ENCODE measurements at regions of chr17 and their contacts with region 1.

Region 1: DNA sequence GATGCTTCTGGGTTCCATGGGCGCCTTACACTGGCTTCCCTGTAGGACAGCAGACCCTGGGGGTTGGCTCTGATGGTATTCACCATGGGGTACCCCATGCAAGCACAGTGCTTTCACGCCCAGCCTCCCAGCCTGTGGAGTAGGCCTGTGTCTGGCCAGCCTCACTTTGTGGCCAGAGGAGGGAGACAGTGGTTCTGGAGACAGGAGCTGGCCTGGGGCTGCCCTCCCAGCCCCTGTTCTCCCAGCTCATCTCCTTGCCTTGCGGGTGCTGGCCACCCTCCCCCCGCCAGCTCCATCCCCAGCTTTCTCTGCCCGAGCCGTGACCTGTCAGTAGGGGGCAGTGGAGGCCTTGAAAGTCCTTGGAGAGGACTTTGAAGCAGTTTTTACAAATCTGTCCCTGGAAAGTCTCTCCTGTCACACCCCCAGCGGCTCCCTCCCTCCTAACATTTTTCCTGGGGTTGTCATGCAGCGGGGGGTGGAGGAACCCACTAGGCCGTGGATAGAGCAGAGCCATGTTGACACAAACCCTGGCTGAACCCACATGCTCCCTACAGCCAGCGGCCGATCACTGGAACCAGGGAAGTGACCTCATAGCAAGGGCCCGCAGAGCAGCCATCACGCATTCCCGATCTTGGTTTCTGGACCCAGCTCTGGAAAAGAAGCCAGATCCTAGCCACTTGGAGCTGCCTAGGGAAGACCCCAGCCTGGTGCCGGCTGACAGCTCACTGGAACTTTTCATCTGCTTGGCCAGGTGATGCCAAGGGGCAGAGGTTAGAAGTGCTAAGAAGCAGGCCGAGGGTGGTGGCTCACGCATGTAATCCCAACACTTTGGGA is 289.4 kb downstream of the SEC14L1 start:
- DNase-seq: peak; percentile 87
- ATAC-seq: peak; percentile 24
- H3K4me3 Mint-ChIP-seq: no peak overlapping the region
- H3K27ac Mint-ChIP-seq: peak overlapping the region; percentile 57
- H3K4me1 Mint-ChIP-seq: peaks cover 96% of the 10 kb centered on the region
- H3K27me3 Mint-ChIP-seq: no peaks in the 10 kb centered on the region

Region 2: GRCh38 chr17:77372444-77373298 is 57.5 kb before region 1 on chr17:
- CTCF ChIA-PET with region 1: interaction called, 25 read pairs
- POLR2A ChIA-PET with region 1: interaction called, 3 read pairs
- DNase-seq: peak; percentile 83
- ATAC-seq: peak; percentile 49
- H3K4me3 Mint-ChIP-seq: peak overlapping the region; percentile 79
- H3K27ac Mint-ChIP-seq: peak overlapping the region; percentile 88
- H3K4me1 Mint-ChIP-seq: peaks cover 56% of the 10 kb centered on the region
- H3K27me3 Mint-ChIP-seq: peaks cover 4% of the 10 kb centered on the region

Region 3: DNA sequence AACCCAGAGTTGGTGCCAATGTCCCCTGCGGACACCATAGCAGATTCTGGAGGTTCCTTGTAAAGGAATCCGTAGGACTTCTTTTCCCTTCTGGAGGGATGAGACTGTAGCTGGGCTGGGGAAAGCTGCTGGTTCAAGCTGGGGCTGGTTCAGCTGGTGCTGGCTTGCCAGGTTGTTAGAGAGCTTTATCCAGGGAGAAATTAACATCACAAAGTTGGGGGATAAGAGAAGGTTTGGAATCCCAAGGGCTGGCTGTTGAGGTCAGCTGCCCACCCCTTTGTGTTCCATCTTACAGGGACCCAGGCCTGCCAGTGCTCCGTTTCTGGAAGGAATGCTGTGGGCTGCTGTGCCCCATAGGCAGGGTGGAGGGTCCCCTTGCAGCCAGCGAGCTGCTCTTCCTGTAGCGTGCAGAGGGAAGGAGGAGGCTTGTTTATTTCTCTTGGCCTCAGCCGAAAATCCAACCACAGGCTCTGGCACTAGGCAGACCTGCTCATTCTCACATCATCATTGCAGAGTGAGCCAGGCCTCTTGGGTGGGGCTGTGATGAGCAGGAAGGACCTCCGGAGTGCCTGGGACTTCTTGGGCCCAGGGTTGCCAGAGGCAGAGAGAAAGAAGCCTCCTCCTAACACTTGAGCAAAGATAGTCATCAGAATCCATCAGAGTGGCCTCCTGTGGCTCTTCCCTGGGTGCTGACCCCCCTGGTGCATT is 38.3 kb before region 1 on chr17:
- CTCF ChIA-PET with region 1: interaction called, 13 read pairs
- POLR2A ChIA-PET with region 1: interaction called, 4 read pairs
- DNase-seq: peak; percentile 84
- ATAC-seq: peak; percentile 54
- H3K4me3 Mint-ChIP-seq: peak overlapping the region; percentile 84
- H3K27ac Mint-ChIP-seq: peak overlapping the region; percentile 92
- H3K4me1 Mint-ChIP-seq: peaks cover 89% of the 10 kb centered on the region
- H3K27me3 Mint-ChIP-seq: no peaks in the 10 kb centered on the region

Region 4: DNA sequence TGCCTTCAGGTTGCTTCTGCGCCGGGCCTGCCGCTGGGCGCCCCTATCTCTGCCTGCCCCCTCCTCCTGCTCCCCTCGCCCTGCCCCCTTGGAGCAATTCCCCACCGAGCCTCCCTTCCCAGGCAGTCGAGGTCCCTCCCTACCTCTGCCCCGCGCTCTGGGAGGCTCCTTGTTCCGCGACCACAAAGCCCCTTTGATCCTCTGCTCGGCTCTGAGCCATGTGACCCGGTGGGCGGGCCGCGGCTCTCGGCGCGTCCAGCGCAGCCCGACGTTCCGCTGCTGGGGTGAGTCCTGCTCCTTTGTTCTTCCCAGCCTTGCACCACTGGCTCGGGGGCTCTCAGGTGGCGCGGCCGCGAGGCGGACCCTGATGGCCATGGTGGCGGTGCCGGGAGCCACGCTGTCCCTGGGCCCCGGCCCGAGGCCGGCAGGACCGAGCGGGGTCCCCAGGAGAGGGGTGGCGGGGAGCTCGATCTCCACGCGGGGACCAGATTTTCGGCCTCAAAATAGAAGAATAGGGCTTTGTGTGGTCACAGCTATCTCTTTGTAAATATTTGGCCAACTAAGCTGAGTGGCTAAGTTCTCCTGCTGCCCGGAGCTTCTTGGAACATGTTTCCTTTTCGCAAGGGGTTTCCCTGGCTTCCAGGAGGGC is 21.2 kb after region 1 on chr17:
- CTCF ChIA-PET with region 1: interaction called, 99 read pairs
- POLR2A ChIA-PET with region 1: interaction called, 169 read pairs
- DNase-seq: peak; percentile 82
- ATAC-seq: peak; percentile 62
- H3K4me3 Mint-ChIP-seq: peak overlapping the region; percentile 85
- H3K27ac Mint-ChIP-seq: peak overlapping the region; percentile 93
- H3K4me1 Mint-ChIP-seq: peaks cover 64% of the 10 kb centered on the region
- H3K27me3 Mint-ChIP-seq: no peaks in the 10 kb centered on the region

Region 5: GRCh38 chr17:77471984-77472461 is 41.9 kb after region 1 on chr17:
- CTCF ChIA-PET with region 1: interaction called, 45 read pairs
- POLR2A ChIA-PET with region 1: interaction called, 5 read pairs
- DNase-seq: no peak
- ATAC-seq: no peak
- H3K4me3 Mint-ChIP-seq: peak overlapping the region; percentile 26
- H3K27ac Mint-ChIP-seq: peak overlapping the region; percentile 60
- H3K4me1 Mint-ChIP-seq: peaks cover 97% of the 10 kb centered on the region
- H3K27me3 Mint-ChIP-seq: no peaks in the 10 kb centered on the region

Measured in activated CD8-positive, alpha-beta T cell treated with anti-CD3 and anti-CD28 coated beads, Interleukin-2, amount 10 ng/mL, durations not matched to agents 7 days and 5 days (primary cell).